Activated CD4-positive, alpha-beta T cell treated with anti-CD3 and anti-CD28 coated beads, Interleukin-2, amount 10 ng/mL, durations not matched to agents 24 days and 14 days (primary cell): ENCODE measurements at regions of chr17 and their contacts with region 1.

Region 1: DNA sequence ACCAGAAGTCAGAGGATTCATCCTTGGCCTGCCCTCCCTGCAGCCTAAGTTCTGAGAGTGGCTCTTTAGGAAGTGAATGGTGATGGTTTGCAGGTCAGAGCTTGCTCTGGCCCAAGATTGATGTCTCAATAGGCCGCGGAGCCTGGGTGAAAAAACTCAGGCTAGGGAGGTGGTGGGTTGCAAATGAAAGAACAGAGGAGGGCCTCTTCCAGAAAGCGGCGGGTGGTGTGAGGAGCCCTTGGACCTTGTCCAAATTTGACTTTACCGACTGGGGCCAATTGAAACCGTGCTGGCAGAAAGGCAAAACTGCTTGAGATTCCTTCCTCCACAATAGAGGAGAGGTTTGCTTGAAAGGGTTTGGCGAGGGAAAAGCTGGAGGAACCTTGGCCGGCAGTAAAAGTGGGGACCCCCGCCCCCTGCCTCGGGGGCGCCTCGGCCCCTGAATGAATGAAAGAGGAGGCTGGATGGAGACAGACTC is 331.3 kb downstream of the SEC14L1 start:
- DNase-seq: no peak
- H3K4me3 Mint-ChIP-seq: peak overlapping the region; percentile 60
- H3K27ac Mint-ChIP-seq: peak overlapping the region; percentile 83
- H3K4me1 Mint-ChIP-seq: peaks cover 83% of the 10 kb centered on the region
- H3K27me3 Mint-ChIP-seq: no peaks in the 10 kb centered on the region

Region 2: DNA sequence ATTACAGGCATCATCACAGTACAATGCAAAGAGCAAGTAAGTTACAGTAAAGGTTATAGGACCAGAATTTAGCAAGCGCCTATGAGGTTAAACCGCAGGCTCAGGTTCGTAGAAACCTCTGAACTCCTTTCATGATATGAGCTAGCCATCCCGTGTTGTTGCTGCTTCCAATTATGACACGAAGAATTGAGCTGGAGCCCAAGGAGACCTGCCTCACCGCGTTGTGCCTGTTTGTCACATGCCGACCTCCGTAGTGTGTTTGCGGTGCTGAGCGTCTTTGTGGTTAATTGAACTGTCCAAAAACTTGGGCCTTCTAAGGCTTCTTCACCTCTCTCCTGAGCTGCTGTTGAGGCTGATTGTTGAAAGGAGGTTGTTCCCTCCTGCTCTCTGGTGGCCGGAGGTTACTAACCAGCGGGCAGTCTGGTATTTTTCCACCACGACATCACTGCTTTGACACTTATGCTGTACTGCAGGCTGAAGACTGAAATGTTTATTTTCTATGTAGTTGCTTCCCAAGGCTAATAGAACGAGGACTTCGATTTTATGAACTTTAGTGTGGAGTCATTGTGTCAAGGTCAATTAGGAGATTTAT is 263.7 kb before region 1 on chr17:
- intact Hi-C with region 1: no loop called
- DNase-seq: no peak
- H3K4me3 Mint-ChIP-seq: no peak overlapping the region
- H3K27ac Mint-ChIP-seq: no peak overlapping the region
- H3K4me1 Mint-ChIP-seq: no peaks in the 10 kb centered on the region
- H3K27me3 Mint-ChIP-seq: no peaks in the 10 kb centered on the region

Region 3: DNA sequence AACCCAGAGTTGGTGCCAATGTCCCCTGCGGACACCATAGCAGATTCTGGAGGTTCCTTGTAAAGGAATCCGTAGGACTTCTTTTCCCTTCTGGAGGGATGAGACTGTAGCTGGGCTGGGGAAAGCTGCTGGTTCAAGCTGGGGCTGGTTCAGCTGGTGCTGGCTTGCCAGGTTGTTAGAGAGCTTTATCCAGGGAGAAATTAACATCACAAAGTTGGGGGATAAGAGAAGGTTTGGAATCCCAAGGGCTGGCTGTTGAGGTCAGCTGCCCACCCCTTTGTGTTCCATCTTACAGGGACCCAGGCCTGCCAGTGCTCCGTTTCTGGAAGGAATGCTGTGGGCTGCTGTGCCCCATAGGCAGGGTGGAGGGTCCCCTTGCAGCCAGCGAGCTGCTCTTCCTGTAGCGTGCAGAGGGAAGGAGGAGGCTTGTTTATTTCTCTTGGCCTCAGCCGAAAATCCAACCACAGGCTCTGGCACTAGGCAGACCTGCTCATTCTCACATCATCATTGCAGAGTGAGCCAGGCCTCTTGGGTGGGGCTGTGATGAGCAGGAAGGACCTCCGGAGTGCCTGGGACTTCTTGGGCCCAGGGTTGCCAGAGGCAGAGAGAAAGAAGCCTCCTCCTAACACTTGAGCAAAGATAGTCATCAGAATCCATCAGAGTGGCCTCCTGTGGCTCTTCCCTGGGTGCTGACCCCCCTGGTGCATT is 80.2 kb before region 1 on chr17:
- intact Hi-C with region 1: loop called (anchors 2 kb)
- DNase-seq: peak; percentile 88
- H3K4me3 Mint-ChIP-seq: peak overlapping the region; percentile 87
- H3K27ac Mint-ChIP-seq: peak overlapping the region; percentile 90
- H3K4me1 Mint-ChIP-seq: peaks cover 74% of the 10 kb centered on the region
- H3K27me3 Mint-ChIP-seq: no peaks in the 10 kb centered on the region

Region 4: DNA sequence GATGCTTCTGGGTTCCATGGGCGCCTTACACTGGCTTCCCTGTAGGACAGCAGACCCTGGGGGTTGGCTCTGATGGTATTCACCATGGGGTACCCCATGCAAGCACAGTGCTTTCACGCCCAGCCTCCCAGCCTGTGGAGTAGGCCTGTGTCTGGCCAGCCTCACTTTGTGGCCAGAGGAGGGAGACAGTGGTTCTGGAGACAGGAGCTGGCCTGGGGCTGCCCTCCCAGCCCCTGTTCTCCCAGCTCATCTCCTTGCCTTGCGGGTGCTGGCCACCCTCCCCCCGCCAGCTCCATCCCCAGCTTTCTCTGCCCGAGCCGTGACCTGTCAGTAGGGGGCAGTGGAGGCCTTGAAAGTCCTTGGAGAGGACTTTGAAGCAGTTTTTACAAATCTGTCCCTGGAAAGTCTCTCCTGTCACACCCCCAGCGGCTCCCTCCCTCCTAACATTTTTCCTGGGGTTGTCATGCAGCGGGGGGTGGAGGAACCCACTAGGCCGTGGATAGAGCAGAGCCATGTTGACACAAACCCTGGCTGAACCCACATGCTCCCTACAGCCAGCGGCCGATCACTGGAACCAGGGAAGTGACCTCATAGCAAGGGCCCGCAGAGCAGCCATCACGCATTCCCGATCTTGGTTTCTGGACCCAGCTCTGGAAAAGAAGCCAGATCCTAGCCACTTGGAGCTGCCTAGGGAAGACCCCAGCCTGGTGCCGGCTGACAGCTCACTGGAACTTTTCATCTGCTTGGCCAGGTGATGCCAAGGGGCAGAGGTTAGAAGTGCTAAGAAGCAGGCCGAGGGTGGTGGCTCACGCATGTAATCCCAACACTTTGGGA is 41.9 kb before region 1 on chr17:
- intact Hi-C with region 1: loop called (anchors 5 kb)
- DNase-seq: peak; percentile 94
- H3K4me3 Mint-ChIP-seq: peak overlapping the region; percentile 35
- H3K27ac Mint-ChIP-seq: peak overlapping the region; percentile 62
- H3K4me1 Mint-ChIP-seq: peaks cover 72% of the 10 kb centered on the region
- H3K27me3 Mint-ChIP-seq: no peaks in the 10 kb centered on the region

Region 5: GRCh38 chr17:77619851-77620250 is 147.8 kb after region 1 on chr17:
- intact Hi-C with region 1: no loop called
- DNase-seq: no peak
- H3K4me3 Mint-ChIP-seq: no peak overlapping the region
- H3K27ac Mint-ChIP-seq: no peak overlapping the region
- H3K4me1 Mint-ChIP-seq: peaks cover 5% of the 10 kb centered on the region
- H3K27me3 Mint-ChIP-seq: peaks cover 3% of the 10 kb centered on the region